K562 (cell line): ENCODE measurements at regions of chr13 and their contacts with region 1.

Region 1: GRCh38 chr13:95275322-95276036 is 25.8 kb downstream of the ABCC4 start:
- DNase-seq: no peak
- ATAC-seq: no peak
- H3K4me3 ChIP-seq: no peak overlapping the region
- H3K27ac ChIP-seq: no peak overlapping the region; the same call in 1 of the 3 replicates
- H3K4me1 ChIP-seq: peaks cover 37 to 52% of the 10 kb centered on the region in 2 experiments; a peak in 4 of 5 replicates
- H3K27me3 ChIP-seq: no peaks in the 10 kb centered on the region
- CTCF ChIP-seq: no peak
- EP300 ChIP-seq: no peak
- POLR2A ChIP-seq: no peak
- RAD21 ChIP-seq: no peak

Region 2: DNA sequence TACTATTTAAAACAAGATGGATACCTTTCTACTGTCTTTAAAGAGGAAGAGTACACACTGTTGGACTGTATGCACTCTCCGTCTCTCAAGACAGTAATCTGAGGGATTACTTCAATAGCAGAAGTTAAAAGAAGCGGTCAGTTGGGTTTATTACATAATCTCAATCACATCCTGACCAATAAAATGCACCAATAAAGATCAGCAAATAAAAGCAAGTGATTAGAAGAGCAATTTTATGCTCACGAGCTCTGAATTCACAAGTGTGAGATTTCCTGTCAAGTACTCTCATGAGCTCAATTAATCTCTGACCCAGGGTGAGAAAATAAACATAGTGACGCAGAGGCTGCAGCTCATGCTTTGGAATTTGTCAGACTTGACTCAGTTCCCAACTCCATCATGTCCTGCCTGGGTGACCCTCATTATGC is 13.6 kb after region 1 on chr13:
- CTCF ChIA-PET with region 1: no interaction called
- POLR2A ChIA-PET with region 1: interaction called, 6 read pairs
- in situ Hi-C with region 1: no loop called
- intact Hi-C with region 1: loop called (anchors 1 kb)
- DNase-seq: no peak
- ATAC-seq: no peak
- H3K4me3 ChIP-seq: no peak overlapping the region
- H3K27ac ChIP-seq: no peak overlapping the region
- H3K4me1 ChIP-seq: peaks cover 21% of the 10 kb centered on the region in 2 experiments; a peak in 4 of 5 replicates
- H3K27me3 ChIP-seq: no peaks in the 10 kb centered on the region
- CTCF ChIP-seq: no peak
- EP300 ChIP-seq: no peak
- POLR2A ChIP-seq: no peak
- RAD21 ChIP-seq: no peak

Region 3: GRCh38 chr13:95378603-95379002 is 103.1 kb after region 1 on chr13:
- CTCF ChIA-PET with region 1: no interaction called
- POLR2A ChIA-PET with region 1: interaction called, 3 read pairs
- in situ Hi-C with region 1: no loop called
- intact Hi-C with region 1: loop called (anchors 2 kb)
- DNase-seq: no peak
- ATAC-seq: no peak; the same call in 2 of the 3 replicates
- H3K4me3 ChIP-seq: no peak overlapping the region
- H3K27ac ChIP-seq: no peak overlapping the region
- H3K4me1 ChIP-seq: peaks cover 0 to 6% of the 10 kb centered on the region in 2 experiments; a peak in 3 of 5 replicates
- H3K27me3 ChIP-seq: no peaks in the 10 kb centered on the region
- CTCF ChIP-seq: no peak
- EP300 ChIP-seq: no peak
- POLR2A ChIP-seq: no peak
- RAD21 ChIP-seq: no peak

Region 4: GRCh38 chr13:95447814-95448213 is 172.3 kb after region 1 on chr13:
- CTCF ChIA-PET with region 1: no interaction called
- POLR2A ChIA-PET with region 1: no interaction called
- in situ Hi-C with region 1: no loop called
- intact Hi-C with region 1: no loop called
- DNase-seq: no peak
- ATAC-seq: no peak
- H3K4me3 ChIP-seq: no peak overlapping the region
- H3K27ac ChIP-seq: no peak overlapping the region
- H3K4me1 ChIP-seq: no peaks in the 10 kb centered on the region; a peak in 2 of 5 replicates
- H3K27me3 ChIP-seq: peaks cover 3 to 10% of the 10 kb centered on the region in 2 experiments; a peak in 2 of 5 replicates
- CTCF ChIP-seq: no peak
- EP300 ChIP-seq: no peak
- POLR2A ChIP-seq: no peak
- RAD21 ChIP-seq: no peak